Activated CD4-positive, alpha-beta memory T cell treated with anti-CD3 and anti-CD28 coated beads for 36 hours (primary cell): ENCODE measurements at regions of chr6 and their contacts with region 1.

Region 1: GRCh38 chr6:137589067-137589848 is 95.1 kb upstream of the OLIG3 start:
- DNase-seq: peak; percentile 75
- H3K4me3 Mint-ChIP-seq: no peak overlapping the region
- H3K27ac Mint-ChIP-seq: peak overlapping the region; percentile 44
- H3K4me1 Mint-ChIP-seq: peaks cover 14% of the 10 kb centered on the region
- H3K27me3 Mint-ChIP-seq: peaks cover 6% of the 10 kb centered on the region

Region 2: GRCh38 chr6:137415127-137415833 is 174.0 kb before region 1 on chr6:
- CTCF ChIA-PET with region 1: interaction called, 15 read pairs
- POLR2A ChIA-PET with region 1: no interaction called
- intact Hi-C with region 1: loop called (anchors 1 kb)
- DNase-seq: peak; percentile 78
- H3K4me3 Mint-ChIP-seq: peak overlapping the region; percentile 71
- H3K27ac Mint-ChIP-seq: peak overlapping the region; percentile 49
- H3K4me1 Mint-ChIP-seq: peaks cover 11% of the 10 kb centered on the region
- H3K27me3 Mint-ChIP-seq: peaks cover 3% of the 10 kb centered on the region

Region 3: DNA sequence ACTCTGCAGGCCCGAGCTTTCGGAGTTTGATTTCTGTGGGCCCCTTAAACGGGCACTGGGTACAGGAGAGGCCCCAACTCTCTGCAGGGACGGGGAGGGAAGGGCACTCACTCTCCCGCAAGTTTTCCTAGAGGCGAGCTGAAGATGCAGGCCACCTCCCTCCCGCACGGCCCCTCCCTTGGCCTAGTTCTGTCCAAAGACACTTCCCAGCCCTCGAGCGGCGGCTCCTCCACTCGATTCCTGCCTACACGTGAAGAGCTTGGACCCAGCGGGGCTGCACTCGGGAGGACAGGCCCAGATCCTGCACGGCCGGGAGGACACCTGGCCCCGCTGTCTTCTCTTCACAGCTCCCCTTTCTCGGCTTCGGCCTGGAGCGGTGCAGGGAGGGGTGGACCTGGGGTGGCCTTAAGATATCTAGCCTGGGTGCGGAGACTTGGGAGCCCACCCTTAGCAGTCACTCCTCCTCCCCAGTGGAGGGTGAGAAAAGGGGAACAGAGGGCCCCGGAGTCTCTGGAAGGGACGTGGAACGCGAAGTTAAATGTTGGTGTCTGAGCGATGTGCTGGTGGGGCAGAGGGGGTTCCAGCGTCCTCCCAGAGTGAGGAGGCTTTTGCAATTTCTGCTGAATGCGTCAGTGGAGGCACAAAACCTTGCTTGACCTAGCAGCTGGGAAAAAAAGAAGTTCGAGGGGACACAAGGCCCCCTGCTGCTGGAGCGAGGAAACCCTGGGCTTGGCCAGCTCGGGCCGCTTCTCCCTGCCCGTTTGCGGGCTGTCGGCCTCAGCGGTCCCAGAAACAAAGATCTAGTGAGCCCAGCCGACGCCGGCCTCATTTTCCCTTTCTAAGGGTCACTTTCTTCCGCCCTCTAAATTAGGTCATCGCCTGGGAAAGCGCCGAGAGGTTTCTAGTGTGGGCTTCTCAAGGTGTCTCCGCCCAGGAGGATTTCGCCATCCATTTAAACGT is 99.9 kb before region 1 on chr6:
- CTCF ChIA-PET with region 1: interaction called, 22 read pairs
- POLR2A ChIA-PET with region 1: no interaction called
- intact Hi-C with region 1: loop called (anchors 1 kb)
- DNase-seq: no peak
- H3K4me3 Mint-ChIP-seq: peak overlapping the region; percentile 35
- H3K27ac Mint-ChIP-seq: peak overlapping the region; percentile 18
- H3K4me1 Mint-ChIP-seq: peaks cover 49% of the 10 kb centered on the region
- H3K27me3 Mint-ChIP-seq: peaks cover 78% of the 10 kb centered on the region

Region 4: GRCh38 chr6:137571854-137572253 is 17.4 kb before region 1 on chr6:
- CTCF ChIA-PET with region 1: interaction called, 15 read pairs
- POLR2A ChIA-PET with region 1: no interaction called
- intact Hi-C with region 1: no loop called
- DNase-seq: peak; percentile 78
- H3K4me3 Mint-ChIP-seq: no peak overlapping the region
- H3K27ac Mint-ChIP-seq: no peak overlapping the region
- H3K4me1 Mint-ChIP-seq: no peaks in the 10 kb centered on the region
- H3K27me3 Mint-ChIP-seq: peaks cover 3% of the 10 kb centered on the region